CD8-positive, alpha-beta T cell (primary cell): ENCODE measurements at regions of chr14 and their contacts with region 1.

Region 1: GRCh38 chr14:65412032-65412846 is at the start of gene FUT8:
- DNase-seq: peak; percentile 87 to 98 (median 96)
- ATAC-seq: peak; percentile 88
- H3K4me3 ChIP-seq: peak within 1 kb of the TSS; percentile 95 to 98
- H3K4me3 Mint-ChIP-seq: peak within 1 kb of the TSS; percentile 99
- H3K27ac ChIP-seq: peak within 1 kb of the TSS; percentile 75 to 86
- H3K27ac Mint-ChIP-seq: peak within 1 kb of the TSS; percentile 98
- H3K4me1 ChIP-seq: peaks cover 11% of the 10 kb centered on the region
- H3K4me1 Mint-ChIP-seq: peaks cover 43% of the 10 kb centered on the region
- H3K27me3 ChIP-seq: no peaks in the 10 kb centered on the region
- H3K27me3 Mint-ChIP-seq: no peaks in the 10 kb centered on the region
- CTCF ChIP-seq: peak; percentile 43
- total RNA-seq, gene FUT8: 38.3 to 38.5 TPM

Region 2: GRCh38 chr14:65102441-65103149 is 309.6 kb before region 1 on chr14 and contains the start of gene MAX:
- CTCF ChIA-PET with region 1: no interaction called
- POLR2A ChIA-PET with region 1: interaction called, 12 read pairs
- intact Hi-C with region 1: loop called (anchors 1 to 2 kb)
- DNase-seq: peak; percentile 96 to 99 (median 98)
- ATAC-seq: peak; percentile 82
- H3K4me3 ChIP-seq: peak within 1 kb of the TSS; percentile 81 to 97
- H3K4me3 Mint-ChIP-seq: peak within 1 kb of the TSS; percentile 88
- H3K27ac ChIP-seq: peak within 1 kb of the TSS; percentile 91 to 95
- H3K27ac Mint-ChIP-seq: peak within 1 kb of the TSS; percentile 96
- H3K4me1 ChIP-seq: peaks cover 35% of the 10 kb centered on the region
- H3K4me1 Mint-ChIP-seq: peaks cover 41% of the 10 kb centered on the region
- H3K27me3 ChIP-seq: no peaks in the 10 kb centered on the region
- H3K27me3 Mint-ChIP-seq: no peaks in the 10 kb centered on the region
- CTCF ChIP-seq: no peak
- total RNA-seq, gene MAX: 143 to 153 TPM

Region 3: DNA sequence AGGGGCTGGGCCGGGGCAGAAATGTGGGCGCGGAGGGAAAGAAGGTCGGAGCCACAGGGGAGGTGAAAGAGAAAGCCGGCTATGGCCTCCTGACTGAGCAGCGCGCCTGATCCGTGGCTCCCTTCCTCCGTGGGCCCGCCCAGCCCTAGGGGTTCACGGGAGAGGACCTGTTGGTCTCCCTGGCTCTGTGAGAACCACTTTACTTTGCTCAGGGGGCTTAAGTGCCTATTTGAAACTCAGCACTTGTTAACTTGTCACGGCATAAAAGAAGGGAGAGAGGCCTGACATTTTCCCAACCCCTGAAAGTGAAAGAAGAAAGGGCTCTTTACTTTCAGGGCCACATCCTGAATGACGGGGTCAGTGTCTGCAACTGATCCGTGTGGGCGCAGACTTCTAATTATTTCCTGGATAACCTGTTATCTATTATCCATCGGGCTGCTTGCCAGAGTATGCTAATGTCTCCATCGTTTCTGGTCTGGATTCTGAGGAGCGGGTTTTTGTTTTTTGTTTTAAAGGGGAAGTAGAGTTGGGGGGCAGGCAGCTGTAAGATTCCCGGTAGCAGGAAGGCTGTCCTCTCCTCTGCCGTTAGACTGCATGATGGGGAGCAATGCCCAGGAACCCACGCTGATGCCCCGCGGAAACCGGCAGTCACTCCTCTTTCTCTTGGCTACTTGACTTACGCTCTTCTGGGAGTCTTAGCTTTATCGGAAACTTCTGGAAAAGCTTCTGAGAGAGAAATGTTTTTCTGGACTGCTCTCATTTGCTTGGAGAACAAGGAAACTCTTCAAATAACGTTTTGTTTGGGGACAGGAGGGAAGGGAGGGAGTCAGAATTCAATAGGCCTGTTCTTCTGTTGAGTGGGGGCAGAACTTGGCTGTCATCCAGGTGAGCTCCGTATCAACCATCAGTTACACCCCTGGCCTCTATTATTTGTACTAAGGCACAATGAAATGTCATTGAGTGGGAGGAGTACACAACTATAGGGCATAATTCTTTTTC is 182.2 kb before region 1 on chr14:
- CTCF ChIA-PET with region 1: interaction called, 34 read pairs
- POLR2A ChIA-PET with region 1: interaction called, 13 read pairs
- intact Hi-C with region 1: no loop called
- DNase-seq: peak in 7 of 9 experiments; percentile 13 to 71 (median 42)
- ATAC-seq: peak; percentile 79
- H3K4me3 ChIP-seq: peak overlapping the region; percentile 43 to 58
- H3K4me3 Mint-ChIP-seq: peak overlapping the region; percentile 87
- H3K27ac ChIP-seq: peak overlapping the region; percentile 26 to 59
- H3K27ac Mint-ChIP-seq: peak overlapping the region; percentile 93
- H3K4me1 ChIP-seq: peaks cover 7% of the 10 kb centered on the region
- H3K4me1 Mint-ChIP-seq: peaks cover 29% of the 10 kb centered on the region
- H3K27me3 ChIP-seq: no peaks in the 10 kb centered on the region
- H3K27me3 Mint-ChIP-seq: no peaks in the 10 kb centered on the region
- CTCF ChIP-seq: no peak

Region 4: GRCh38 chr14:65287264-65288131 is 124.7 kb before region 1 on chr14:
- CTCF ChIA-PET with region 1: interaction called, 17 read pairs
- POLR2A ChIA-PET with region 1: interaction called, 57 read pairs
- intact Hi-C with region 1: loop called (anchors 1 to 2 kb)
- DNase-seq: peak in 8 of 9 experiments; percentile 34 to 83 (median 52)
- ATAC-seq: peak; percentile 77
- H3K4me3 ChIP-seq: peak overlapping the region; percentile 26 to 28
- H3K4me3 Mint-ChIP-seq: peak overlapping the region; percentile 80
- H3K27ac ChIP-seq: peak overlapping the region; percentile 52 to 78
- H3K27ac Mint-ChIP-seq: peak overlapping the region; percentile 99
- H3K4me1 ChIP-seq: peaks cover 70% of the 10 kb centered on the region
- H3K4me1 Mint-ChIP-seq: peaks cover 74% of the 10 kb centered on the region
- H3K27me3 ChIP-seq: no peaks in the 10 kb centered on the region
- H3K27me3 Mint-ChIP-seq: no peaks in the 10 kb centered on the region
- CTCF ChIP-seq: no peak

Region 5: GRCh38 chr14:65356327-65356852 is 55.8 kb before region 1 on chr14:
- CTCF ChIA-PET with region 1: no interaction called
- POLR2A ChIA-PET with region 1: no interaction called
- intact Hi-C with region 1: no loop called
- DNase-seq: peak in 2 of 9 experiments; percentile 14 to 20
- ATAC-seq: no peak
- H3K4me3 ChIP-seq: no peak overlapping the region
- H3K4me3 Mint-ChIP-seq: no peak overlapping the region
- H3K27ac ChIP-seq: no peak overlapping the region
- H3K27ac Mint-ChIP-seq: no peak overlapping the region
- H3K4me1 ChIP-seq: peaks cover 8% of the 10 kb centered on the region
- H3K4me1 Mint-ChIP-seq: peaks cover 22% of the 10 kb centered on the region
- H3K27me3 ChIP-seq: no peaks in the 10 kb centered on the region
- H3K27me3 Mint-ChIP-seq: no peaks in the 10 kb centered on the region
- CTCF ChIP-seq: no peak

Region 6: GRCh38 chr14:65370801-65371248 is 41.4 kb before region 1 on chr14:
- CTCF ChIA-PET with region 1: no interaction called
- POLR2A ChIA-PET with region 1: no interaction called
- intact Hi-C with region 1: no loop called
- DNase-seq: no peak
- ATAC-seq: no peak
- H3K4me3 ChIP-seq: no peak overlapping the region
- H3K4me3 Mint-ChIP-seq: no peak overlapping the region
- H3K27ac ChIP-seq: no peak overlapping the region
- H3K27ac Mint-ChIP-seq: no peak overlapping the region
- H3K4me1 ChIP-seq: no peaks in the 10 kb centered on the region
- H3K4me1 Mint-ChIP-seq: peaks cover 9% of the 10 kb centered on the region
- H3K27me3 ChIP-seq: no peaks in the 10 kb centered on the region
- H3K27me3 Mint-ChIP-seq: no peaks in the 10 kb centered on the region
- CTCF ChIP-seq: no peak

Region 7: DNA sequence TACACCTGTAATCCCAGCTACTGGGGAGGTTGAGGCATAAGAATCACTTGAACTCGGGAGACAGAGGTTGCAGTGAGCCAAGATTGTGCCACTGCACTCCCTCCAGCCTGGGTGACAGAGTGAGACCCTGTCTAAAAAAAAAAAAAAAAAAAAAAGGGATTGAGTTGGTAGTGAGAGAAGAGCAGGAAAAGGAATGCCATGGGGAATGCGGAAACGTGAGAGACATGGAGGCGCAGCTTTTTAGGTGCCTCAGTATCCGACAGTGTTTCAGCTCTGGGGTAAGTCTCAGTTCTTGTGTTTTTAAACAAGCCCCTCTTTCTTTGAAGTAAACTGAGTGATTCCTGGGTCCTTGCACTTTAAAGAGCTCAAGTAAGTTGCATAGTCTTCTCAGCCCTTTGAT is 10.5 kb before region 1 on chr14:
- CTCF ChIA-PET with region 1: interaction called, 6 read pairs
- POLR2A ChIA-PET with region 1: interaction called, 12 read pairs
- intact Hi-C with region 1: no loop called
- DNase-seq: no peak
- ATAC-seq: no peak
- H3K4me3 ChIP-seq: no peak overlapping the region
- H3K4me3 Mint-ChIP-seq: no peak overlapping the region
- H3K27ac ChIP-seq: no peak overlapping the region
- H3K27ac Mint-ChIP-seq: no peak overlapping the region
- H3K4me1 ChIP-seq: no peaks in the 10 kb centered on the region
- H3K4me1 Mint-ChIP-seq: no peaks in the 10 kb centered on the region
- H3K27me3 ChIP-seq: no peaks in the 10 kb centered on the region
- H3K27me3 Mint-ChIP-seq: no peaks in the 10 kb centered on the region
- CTCF ChIP-seq: no peak

Region 8: DNA sequence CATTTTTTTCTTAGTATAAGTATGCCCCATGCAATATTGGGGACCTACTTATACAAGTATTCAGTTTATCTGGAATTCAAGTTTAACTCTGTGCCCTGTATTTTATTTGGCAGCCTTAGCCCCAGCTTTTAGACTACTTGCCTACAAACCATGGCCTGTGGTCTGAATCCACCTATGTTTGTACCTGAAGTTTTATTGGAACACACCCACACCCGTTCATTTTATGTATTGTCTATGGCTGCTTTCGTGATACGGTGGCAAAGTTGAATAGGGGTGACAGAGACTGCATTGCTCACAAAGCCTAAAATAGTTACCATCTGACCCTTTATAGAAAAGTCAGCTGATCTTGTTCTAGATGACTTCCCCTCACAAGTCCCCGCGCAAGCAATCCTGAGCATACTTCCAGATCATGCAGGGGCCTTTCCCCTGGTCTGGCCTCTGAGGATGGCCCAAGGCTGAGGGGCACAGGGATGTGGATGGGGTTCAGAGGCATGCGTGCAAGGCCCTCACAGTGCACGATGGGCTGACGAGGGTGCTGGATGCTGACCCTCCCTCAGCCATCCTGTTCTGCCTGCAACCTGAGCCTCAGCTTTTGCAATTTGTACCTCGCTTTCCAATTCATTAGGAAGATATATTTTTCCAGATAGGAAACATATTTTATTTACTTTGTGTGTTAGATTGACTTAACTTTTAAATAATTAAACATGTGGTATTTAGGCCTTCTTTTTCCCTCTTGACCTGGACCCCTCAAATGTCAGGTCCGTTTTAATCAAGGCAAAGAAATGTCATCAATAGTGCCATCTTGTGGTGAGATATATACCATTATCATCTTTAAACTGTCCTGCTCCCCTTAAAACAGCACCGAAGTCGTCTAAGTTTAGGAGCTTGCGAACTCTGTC is 546.7 kb after region 1 on chr14:
- CTCF ChIA-PET with region 1: interaction called, 74 read pairs
- POLR2A ChIA-PET with region 1: interaction called, 15 read pairs
- intact Hi-C with region 1: loop called (anchors 1 kb)
- DNase-seq: peak in 2 of 9 experiments; percentile 55 to 69
- ATAC-seq: peak; percentile 57
- H3K4me3 ChIP-seq: no peak overlapping the region
- H3K4me3 Mint-ChIP-seq: no peak overlapping the region
- H3K27ac ChIP-seq: no peak overlapping the region
- H3K27ac Mint-ChIP-seq: no peak overlapping the region
- H3K4me1 ChIP-seq: peaks cover 19% of the 10 kb centered on the region
- H3K4me1 Mint-ChIP-seq: peaks cover 26% of the 10 kb centered on the region
- H3K27me3 ChIP-seq: no peaks in the 10 kb centered on the region
- H3K27me3 Mint-ChIP-seq: no peaks in the 10 kb centered on the region
- CTCF ChIP-seq: peak; percentile 83

Region 9: DNA sequence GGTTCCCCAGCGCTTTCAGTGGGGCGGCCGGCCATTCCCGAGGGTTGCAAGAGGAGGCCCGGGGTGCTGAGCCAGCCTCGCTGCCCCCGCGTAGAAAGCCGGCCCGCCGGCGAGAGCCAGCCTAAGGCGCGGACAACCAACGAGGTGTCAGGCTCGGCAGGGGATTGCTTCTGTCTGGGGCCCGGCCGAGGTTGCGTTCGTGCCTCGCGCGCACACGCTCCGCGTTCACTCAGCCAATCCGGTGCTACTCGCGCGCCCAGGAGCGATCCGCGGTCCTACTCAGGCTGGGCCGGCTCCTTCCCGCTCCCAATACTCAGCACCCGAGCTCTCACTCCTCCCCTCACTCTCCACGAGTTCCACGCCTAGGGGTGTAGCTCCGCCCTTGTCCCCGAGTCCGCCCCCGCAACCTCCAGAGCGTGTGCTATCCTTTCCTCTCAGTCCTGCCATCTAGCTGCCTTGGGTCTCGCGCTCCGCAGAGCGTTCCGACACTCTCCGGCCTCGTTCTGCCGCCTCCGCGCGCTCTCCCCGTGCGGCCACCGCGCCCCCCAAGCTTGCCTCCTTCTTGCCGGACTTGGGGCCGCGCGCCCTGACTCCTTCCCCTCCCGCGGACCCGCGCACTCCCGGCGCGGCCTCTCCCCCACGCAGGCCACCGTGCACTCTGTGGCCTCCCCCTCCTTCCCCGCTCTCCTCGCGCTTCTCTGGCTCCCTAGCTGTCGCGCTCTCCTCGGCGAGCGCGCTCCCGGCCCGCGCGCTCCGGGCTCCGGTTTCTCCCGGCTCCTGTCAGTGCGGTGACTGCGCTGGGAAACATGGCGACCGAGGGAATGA is 1095.7 kb after region 1 on chr14 and contains the start of gene GPHN:
- CTCF ChIA-PET with region 1: no interaction called
- POLR2A ChIA-PET with region 1: no interaction called
- intact Hi-C with region 1: loop called in 1 of 2 experiments (anchors 5 kb)
- DNase-seq: peak; percentile 53 to 91 (median 82)
- ATAC-seq: peak; percentile 90
- H3K4me3 ChIP-seq: peak within 1 kb of the TSS; percentile 75 to 81
- H3K4me3 Mint-ChIP-seq: peak within 1 kb of the TSS; percentile 99
- H3K27ac ChIP-seq: peak within 1 kb of the TSS; percentile 55 to 67
- H3K27ac Mint-ChIP-seq: peak within 1 kb of the TSS; percentile 91
- H3K4me1 ChIP-seq: no peaks in the 10 kb centered on the region
- H3K4me1 Mint-ChIP-seq: peaks cover 35% of the 10 kb centered on the region
- H3K27me3 ChIP-seq: no peaks in the 10 kb centered on the region
- H3K27me3 Mint-ChIP-seq: no peaks in the 10 kb centered on the region
- CTCF ChIP-seq: no peak
- total RNA-seq, gene GPHN: 8.2 to 9.3 TPM